Activated CD4-positive, alpha-beta T cell treated with anti-CD3 and anti-CD28 coated beads for 36 hours (primary cell): ENCODE measurements at regions of chr12 and their contacts with region 1.

Region 1: GRCh38 chr12:49264738-49265515 is at the start of gene TUBA1C:
- DNase-seq: peak; percentile 95
- ATAC-seq: peak; percentile 90
- H3K4me3 Mint-ChIP-seq: peak within 1 kb of the TSS; percentile 93
- H3K27ac Mint-ChIP-seq: peak within 1 kb of the TSS; percentile 96
- H3K4me1 Mint-ChIP-seq: peaks cover 47% of the 10 kb centered on the region
- H3K27me3 Mint-ChIP-seq: no peaks in the 10 kb centered on the region
- total RNA-seq, gene TUBA1C: 276 to 338 TPM

Region 2: DNA sequence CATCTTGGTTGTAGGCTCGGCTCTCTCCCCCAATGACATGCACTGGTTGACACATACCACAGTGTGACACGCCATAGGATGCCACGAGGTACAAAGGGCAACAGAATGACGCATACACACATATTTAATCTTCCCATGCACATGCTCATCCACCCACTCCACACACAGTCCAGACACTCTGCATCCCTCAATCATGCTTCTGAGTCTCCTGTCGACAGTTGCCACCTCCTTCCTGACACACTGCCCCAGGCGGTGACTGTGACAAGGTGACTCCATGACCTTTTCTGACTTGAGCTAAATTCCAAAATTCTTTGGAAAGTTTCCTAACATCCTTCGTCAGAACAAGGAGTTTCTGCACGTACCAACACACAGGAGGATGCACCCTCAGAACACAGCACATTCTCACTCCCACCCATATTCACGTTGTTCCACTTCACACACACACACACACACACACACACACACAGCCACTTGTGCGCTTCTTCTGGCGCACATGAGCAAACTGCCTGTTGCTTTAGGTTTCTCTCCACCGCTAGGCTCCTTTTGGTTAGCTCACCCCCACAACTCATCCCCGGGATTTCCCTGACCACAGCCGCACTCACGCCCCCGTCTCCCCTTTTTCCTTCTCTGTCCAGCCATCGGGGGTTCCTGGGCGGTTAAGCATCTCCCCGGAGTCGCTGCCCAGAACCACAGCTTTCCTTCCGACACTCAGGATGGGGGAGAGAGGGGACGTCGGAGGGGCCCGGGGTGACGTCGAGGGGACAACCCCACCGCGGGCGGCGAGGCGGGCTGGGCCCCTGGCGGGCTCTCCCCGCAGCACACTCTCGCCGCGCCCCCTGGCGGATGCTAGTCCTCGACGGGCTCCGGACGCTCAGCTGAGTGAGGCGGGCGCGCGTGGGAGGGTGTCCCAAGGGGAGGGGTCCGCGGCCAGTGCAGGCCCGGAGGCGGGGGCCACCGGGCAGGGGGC is 287.3 kb before region 1 on chr12:
- CTCF ChIA-PET with region 1: no interaction called
- POLR2A ChIA-PET with region 1: no interaction called
- intact Hi-C with region 1: no loop called
- DNase-seq: peak; percentile 92
- ATAC-seq: peak; percentile 69
- H3K4me3 Mint-ChIP-seq: peak overlapping the region; percentile 42
- H3K27ac Mint-ChIP-seq: peak overlapping the region; percentile 10
- H3K4me1 Mint-ChIP-seq: peaks cover 54% of the 10 kb centered on the region
- H3K27me3 Mint-ChIP-seq: peaks cover 73% of the 10 kb centered on the region

Region 3: GRCh38 chr12:49060237-49061156 is 204.4 kb before region 1 on chr12 and contains the start of gene KMT2D:
- CTCF ChIA-PET with region 1: interaction called, 4 read pairs
- POLR2A ChIA-PET with region 1: no interaction called
- intact Hi-C with region 1: loop called in 1 of 2 experiments (anchors 2 kb)
- DNase-seq: peak; percentile 94
- ATAC-seq: peak; percentile 75
- H3K4me3 Mint-ChIP-seq: peak within 1 kb of the TSS; percentile 98
- H3K27ac Mint-ChIP-seq: peak within 1 kb of the TSS; percentile 95
- H3K4me1 Mint-ChIP-seq: peaks cover 45% of the 10 kb centered on the region
- H3K27me3 Mint-ChIP-seq: no peaks in the 10 kb centered on the region
- total RNA-seq, gene KMT2D: 48.3 to 58.2 TPM

Region 4: DNA sequence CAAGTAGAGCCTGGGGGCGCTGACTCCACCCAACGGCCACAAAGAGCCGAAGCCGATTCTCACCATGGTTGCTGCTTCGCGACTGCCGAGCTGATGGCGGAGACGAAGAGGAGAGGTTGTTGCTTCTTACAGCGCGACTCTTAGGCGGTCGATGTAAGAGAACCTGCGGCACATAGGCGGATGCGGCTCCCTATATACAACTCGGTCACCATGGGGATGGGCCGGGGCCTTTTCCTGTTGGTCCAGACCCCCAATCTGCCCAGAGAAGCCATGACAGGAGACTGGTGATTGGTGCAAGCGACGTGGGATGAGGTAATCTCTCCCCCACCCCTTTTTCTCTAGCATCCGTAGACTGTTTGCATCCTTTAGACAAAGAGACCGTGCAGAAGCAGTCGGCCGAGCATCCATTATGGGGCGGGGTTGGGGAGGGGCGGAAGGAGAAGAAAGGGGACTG is 76.0 kb before region 1 on chr12 and contains the start of gene TUBA1A:
- CTCF ChIA-PET with region 1: interaction called, 3 read pairs
- POLR2A ChIA-PET with region 1: interaction called, 3 read pairs
- intact Hi-C with region 1: loop called (anchors 1 kb)
- DNase-seq: peak; percentile 97
- ATAC-seq: peak; percentile 95
- H3K4me3 Mint-ChIP-seq: peak within 1 kb of the TSS; percentile 92
- H3K27ac Mint-ChIP-seq: peak within 1 kb of the TSS; percentile 92
- H3K4me1 Mint-ChIP-seq: peaks cover 24% of the 10 kb centered on the region
- H3K27me3 Mint-ChIP-seq: no peaks in the 10 kb centered on the region
- total RNA-seq, gene TUBA1A: 75.7 to 98.5 TPM

Region 5: DNA sequence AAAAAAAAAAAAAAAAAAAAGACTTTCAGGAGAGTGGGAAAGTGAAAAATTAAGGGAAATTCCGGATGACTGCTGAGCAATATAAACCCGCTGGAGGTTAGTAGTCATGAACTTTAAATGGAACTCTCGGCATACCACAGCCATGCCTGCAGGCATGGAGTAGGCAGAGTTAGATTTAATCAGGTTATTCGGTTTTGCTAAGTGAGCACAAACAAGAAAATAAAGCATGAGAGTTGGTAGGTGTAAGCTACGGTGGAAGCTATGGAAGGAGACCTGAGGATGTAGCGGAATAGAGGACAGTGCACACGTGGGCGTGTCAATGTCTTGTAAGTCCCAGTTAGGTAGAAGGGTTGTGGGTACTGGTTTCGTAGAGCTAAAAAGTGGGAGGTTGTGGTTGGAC is 11.8 kb before region 1 on chr12:
- CTCF ChIA-PET with region 1: interaction called, 12 read pairs
- POLR2A ChIA-PET with region 1: no interaction called
- intact Hi-C with region 1: no loop called
- DNase-seq: no peak
- ATAC-seq: peak; percentile 81
- H3K4me3 Mint-ChIP-seq: no peak overlapping the region
- H3K27ac Mint-ChIP-seq: no peak overlapping the region
- H3K4me1 Mint-ChIP-seq: peaks cover 3% of the 10 kb centered on the region
- H3K27me3 Mint-ChIP-seq: no peaks in the 10 kb centered on the region

Region 6: GRCh38 chr12:49342066-49342913 is 77.4 kb after region 1 on chr12:
- CTCF ChIA-PET with region 1: interaction called, 9 read pairs
- POLR2A ChIA-PET with region 1: no interaction called
- intact Hi-C with region 1: loop called in 1 of 2 experiments (anchors 1 kb)
- DNase-seq: peak; percentile 92
- ATAC-seq: peak; percentile 81
- H3K4me3 Mint-ChIP-seq: peak overlapping the region; percentile 47
- H3K27ac Mint-ChIP-seq: no peak overlapping the region
- H3K4me1 Mint-ChIP-seq: peaks cover 47% of the 10 kb centered on the region
- H3K27me3 Mint-ChIP-seq: peaks cover 71% of the 10 kb centered on the region

Region 7: DNA sequence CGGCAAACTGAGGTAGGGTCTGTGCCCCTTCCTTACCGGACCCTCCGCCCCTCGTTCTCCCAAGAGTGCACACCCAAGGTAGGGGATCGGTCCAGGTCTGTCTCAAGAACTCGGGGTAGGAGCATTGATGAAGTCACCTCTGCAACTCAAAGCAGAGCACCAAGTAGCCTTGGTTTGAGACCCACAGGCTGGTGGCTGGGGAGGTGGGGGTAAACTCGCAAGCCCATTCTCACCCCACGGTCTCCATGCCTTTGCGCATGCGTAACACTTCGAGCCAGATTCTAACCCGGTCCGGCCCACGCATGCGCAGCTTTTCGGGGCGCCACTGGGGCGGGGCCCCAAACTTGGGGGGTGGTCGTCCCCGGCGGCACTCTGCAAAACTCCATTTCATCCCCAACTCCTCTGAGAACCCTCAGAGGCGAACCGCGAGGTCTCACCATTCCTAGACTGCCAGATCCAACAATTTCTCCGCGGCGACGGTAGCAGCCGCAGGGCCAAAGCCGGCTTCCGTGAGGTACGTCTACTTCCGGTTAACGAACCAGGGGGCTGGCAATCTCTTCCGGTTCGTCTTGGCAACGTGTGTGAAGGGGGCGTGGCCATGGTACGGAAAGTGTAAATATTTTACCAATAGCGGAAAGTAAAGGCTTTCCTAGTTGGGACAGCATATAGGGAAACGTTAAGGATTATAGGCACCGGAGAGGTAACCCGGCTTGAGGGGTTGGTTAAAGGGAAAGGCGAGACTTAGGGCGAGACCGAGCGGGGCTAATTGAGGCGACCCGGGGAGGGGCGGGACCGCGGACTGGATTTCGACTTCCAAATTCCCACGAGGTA is 302.9 kb after region 1 on chr12 and contains the start of gene MCRS1:
- CTCF ChIA-PET with region 1: no interaction called
- POLR2A ChIA-PET with region 1: no interaction called
- intact Hi-C with region 1: loop called in 1 of 2 experiments (anchors 1 kb)
- DNase-seq: peak; percentile 93
- ATAC-seq: peak; percentile 88
- H3K4me3 Mint-ChIP-seq: peak within 1 kb of the TSS; percentile 90
- H3K27ac Mint-ChIP-seq: peak within 1 kb of the TSS; percentile 95
- H3K4me1 Mint-ChIP-seq: peaks cover 37% of the 10 kb centered on the region
- H3K27me3 Mint-ChIP-seq: no peaks in the 10 kb centered on the region
- total RNA-seq, gene MCRS1: 48.2 to 58.2 TPM

Region 8: GRCh38 chr12:49821373-49822287 is 556.7 kb after region 1 on chr12:
- CTCF ChIA-PET with region 1: no interaction called
- POLR2A ChIA-PET with region 1: no interaction called
- intact Hi-C with region 1: no loop called
- DNase-seq: no peak
- ATAC-seq: peak; percentile 40
- H3K4me3 Mint-ChIP-seq: no peak overlapping the region
- H3K27ac Mint-ChIP-seq: peak overlapping the region; percentile 77
- H3K4me1 Mint-ChIP-seq: peaks cover 28% of the 10 kb centered on the region
- H3K27me3 Mint-ChIP-seq: no peaks in the 10 kb centered on the region

Region 9: DNA sequence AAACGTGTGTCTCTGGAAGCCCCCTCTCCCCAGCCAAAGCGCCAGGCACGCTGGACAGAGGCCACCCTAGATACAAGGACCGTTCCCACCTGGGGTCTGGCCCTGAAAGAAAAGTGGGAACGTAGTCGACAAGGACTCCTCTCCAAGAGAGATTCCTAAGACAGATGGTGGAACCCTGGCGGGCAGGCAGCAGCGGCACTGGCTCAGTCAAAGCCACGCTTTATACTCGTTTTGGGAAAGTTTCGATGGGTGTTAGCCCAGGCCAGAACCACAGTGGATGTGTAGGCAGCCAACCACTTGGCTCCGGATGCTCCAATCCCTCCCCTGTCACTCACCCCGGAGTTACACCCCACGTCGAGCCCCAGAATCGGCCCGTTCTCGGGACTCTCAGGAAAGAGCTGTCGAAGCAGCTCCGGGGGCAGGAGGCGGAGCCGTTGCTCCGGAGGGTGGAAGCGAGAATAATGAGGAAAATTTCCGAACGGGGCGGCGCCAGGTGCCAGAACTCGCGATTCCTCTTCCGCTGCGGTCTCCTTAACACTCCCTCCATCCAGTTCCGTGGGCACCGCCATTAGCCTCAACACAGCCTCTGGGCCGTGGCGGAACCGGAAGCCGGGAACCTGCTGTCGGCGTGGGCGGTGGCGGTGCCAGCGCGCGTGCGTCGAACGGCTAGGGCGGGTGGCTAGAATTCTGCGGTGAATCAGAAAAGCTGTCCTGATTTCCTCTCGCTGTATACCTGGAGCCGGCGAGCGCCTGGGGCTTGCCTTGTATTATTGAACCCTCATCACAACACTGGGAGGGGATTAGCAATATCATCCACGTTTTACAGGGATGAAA is 577.8 kb after region 1 on chr12 and contains the start of gene BCDIN3D:
- CTCF ChIA-PET with region 1: no interaction called
- POLR2A ChIA-PET with region 1: no interaction called
- intact Hi-C with region 1: loop called in 1 of 2 experiments (anchors 1 kb)
- DNase-seq: peak; percentile 97
- ATAC-seq: peak; percentile 92
- H3K4me3 Mint-ChIP-seq: peak within 1 kb of the TSS; percentile 90
- H3K27ac Mint-ChIP-seq: peak within 1 kb of the TSS; percentile 91
- H3K4me1 Mint-ChIP-seq: peaks cover 30% of the 10 kb centered on the region
- H3K27me3 Mint-ChIP-seq: no peaks in the 10 kb centered on the region
- total RNA-seq, gene BCDIN3D: 5.5 to 5.6 TPM